Activated CD8-positive, alpha-beta T cell treated with anti-CD3 and anti-CD28 coated beads, Interleukin-2, amount 10 ng/mL, durations not matched to agents 7 days and 5 days (primary cell): ENCODE measurements at regions of chr16 and their contacts with region 1.

Region 1: DNA sequence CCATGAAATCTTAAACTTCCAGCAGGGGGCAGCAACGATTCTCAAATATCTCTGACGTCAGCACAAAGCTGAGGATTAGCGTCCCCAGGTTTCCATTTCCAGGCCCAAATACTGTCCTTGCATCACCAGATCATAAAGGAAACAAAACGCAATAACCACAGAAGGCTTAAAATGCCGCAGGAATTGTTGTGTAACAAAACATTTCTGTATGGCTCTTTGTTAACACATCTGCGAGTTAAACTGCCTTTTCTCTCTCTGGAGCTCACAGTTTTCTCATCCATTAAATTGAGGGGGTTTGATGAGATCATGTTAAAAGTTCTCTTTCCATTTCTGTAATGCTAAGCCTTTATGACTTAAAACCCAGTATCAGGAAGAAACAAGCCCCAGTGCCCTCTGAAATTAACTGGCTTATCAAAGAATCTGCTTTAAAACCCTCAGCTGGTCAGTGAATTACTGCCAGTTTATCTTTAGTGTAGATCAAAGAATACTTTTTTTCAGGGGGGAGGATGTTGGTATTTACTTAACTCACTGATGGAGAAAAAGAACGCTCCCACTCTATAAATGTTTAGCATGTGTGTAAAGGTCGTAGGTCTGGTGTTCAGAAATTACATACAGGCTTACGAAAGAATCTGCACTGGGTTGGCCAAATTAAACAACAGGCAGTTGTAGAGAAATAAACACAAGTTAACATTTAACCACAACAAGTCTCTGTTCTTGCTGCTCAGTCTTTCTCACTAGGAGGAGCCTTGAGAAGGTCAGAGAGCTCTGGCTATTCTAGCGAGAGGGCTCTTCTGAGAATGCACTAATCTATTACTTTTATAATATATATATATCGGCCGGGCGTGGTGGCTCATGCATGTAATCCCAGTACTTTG is 10.6 kb upstream of the TERF2 start:
- DNase-seq: peak; percentile 84
- ATAC-seq: peak; percentile 73
- H3K4me3 Mint-ChIP-seq: no peak overlapping the region
- H3K27ac Mint-ChIP-seq: peak overlapping the region; percentile 47
- H3K4me1 Mint-ChIP-seq: peaks cover 18% of the 10 kb centered on the region
- H3K27me3 Mint-ChIP-seq: no peaks in the 10 kb centered on the region

Region 2: GRCh38 chr16:69410285-69410990 is 14.0 kb after region 1 on chr16:
- CTCF ChIA-PET with region 1: interaction called, 39 read pairs
- POLR2A ChIA-PET with region 1: interaction called, 3 read pairs
- DNase-seq: no peak
- ATAC-seq: no peak
- H3K4me3 Mint-ChIP-seq: no peak overlapping the region
- H3K27ac Mint-ChIP-seq: peak overlapping the region; percentile 86
- H3K4me1 Mint-ChIP-seq: peaks cover 27% of the 10 kb centered on the region
- H3K27me3 Mint-ChIP-seq: no peaks in the 10 kb centered on the region

Region 3: GRCh38 chr16:69424053-69424934 is 27.9 kb after region 1 on chr16 and contains the start of gene CYB5B:
- CTCF ChIA-PET with region 1: interaction called, 20 read pairs
- POLR2A ChIA-PET with region 1: interaction called, 5 read pairs
- DNase-seq: peak; percentile 98
- ATAC-seq: peak; percentile 98
- H3K4me3 Mint-ChIP-seq: peak within 1 kb of the TSS; percentile 93
- H3K27ac Mint-ChIP-seq: peak within 1 kb of the TSS; percentile 91
- H3K4me1 Mint-ChIP-seq: peaks cover 33% of the 10 kb centered on the region
- H3K27me3 Mint-ChIP-seq: no peaks in the 10 kb centered on the region
- total RNA-seq, gene CYB5B: 179 to 183 TPM

Region 4: GRCh38 chr16:69465083-69465721 is 68.8 kb after region 1 on chr16:
- CTCF ChIA-PET with region 1: interaction called, 26 read pairs
- POLR2A ChIA-PET with region 1: no interaction called
- DNase-seq: no peak
- ATAC-seq: peak; percentile 50
- H3K4me3 Mint-ChIP-seq: no peak overlapping the region
- H3K27ac Mint-ChIP-seq: peak overlapping the region; percentile 70
- H3K4me1 Mint-ChIP-seq: peaks cover 44% of the 10 kb centered on the region
- H3K27me3 Mint-ChIP-seq: no peaks in the 10 kb centered on the region

Region 5: DNA sequence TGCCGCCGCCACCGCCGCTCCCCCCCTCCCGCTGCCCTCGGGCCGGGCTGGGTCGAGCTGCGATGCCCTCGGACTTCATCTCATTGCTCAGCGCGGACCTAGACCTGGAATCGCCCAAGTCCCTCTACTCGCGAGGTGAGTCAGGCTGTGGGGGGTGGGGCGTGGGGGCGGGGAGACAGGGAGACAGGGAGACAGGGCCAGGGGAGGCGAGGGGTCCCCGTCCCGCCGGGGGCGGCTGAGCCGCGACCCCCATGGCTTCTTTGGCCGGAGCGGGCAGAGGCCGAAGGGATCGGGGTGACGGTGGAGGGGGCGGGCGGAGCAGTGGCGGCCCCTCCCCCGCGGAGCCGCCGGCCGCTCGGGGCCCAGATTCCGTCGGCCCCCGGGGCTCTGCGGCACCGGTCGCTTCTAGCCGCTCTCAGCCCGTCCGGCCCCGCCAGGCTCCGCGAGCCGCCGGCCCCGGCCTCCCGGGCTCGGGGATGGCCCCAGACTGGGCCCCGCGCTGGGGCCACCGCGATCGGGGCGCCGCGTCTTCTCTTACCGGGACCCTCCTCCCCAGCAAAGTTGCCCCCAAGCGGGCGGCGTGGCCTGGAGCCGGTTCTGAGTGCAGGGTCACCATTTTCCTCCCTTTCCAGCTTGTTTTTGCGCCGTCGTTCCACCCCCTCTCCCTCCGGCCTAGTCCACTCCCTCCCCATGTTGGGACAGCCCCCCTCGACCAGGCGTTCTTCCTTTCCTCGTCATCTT is 170.0 kb after region 1 on chr16:
- CTCF ChIA-PET with region 1: interaction called, 23 read pairs
- POLR2A ChIA-PET with region 1: interaction called, 3 read pairs
- DNase-seq: peak; percentile 43
- ATAC-seq: peak; percentile 56
- H3K4me3 Mint-ChIP-seq: peak overlapping the region; percentile 96
- H3K27ac Mint-ChIP-seq: peak overlapping the region; percentile 95
- H3K4me1 Mint-ChIP-seq: peaks cover 47% of the 10 kb centered on the region
- H3K27me3 Mint-ChIP-seq: no peaks in the 10 kb centered on the region

Region 6: DNA sequence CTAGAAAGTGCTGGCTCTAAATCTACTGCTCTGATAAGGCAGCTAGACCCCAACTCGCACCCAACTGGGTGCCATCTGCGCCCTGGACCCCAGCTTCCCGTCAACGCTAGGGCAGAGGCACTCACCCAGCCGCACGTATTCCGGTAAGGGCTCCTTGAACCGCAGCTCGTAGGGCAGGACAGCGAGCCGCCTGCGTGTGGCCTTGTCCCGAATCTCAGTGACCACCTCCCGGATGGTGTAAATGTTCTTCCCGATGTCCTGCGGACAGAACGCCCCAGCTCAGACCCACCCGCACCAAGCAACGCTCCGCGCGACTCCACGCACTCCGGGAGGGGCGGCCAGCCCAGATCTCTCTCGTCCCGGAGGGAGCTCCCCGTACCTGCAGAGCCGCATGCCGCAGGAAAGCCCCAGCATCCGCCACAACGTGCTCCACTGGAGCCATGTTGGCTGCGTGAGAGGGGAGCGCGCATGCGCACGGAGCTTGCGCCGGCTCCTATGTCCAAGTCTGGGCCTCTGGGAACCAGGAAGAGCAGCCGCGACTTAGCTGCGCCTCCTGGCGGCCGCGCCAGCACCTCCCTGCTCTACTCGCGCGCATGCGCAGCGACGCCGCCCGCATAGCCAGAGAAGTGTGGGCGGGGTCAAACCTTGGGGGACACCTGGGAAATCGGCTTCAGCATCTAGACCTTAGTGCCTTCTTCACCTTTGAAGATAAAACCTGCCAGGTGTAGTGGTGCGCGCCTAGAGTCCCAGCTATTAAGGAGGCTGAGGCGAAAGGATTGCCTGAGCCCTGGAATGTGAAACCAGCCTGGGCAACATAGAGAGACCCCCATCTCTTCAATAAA is 358.3 kb after region 1 on chr16 and contains the start of gene NOB1:
- CTCF ChIA-PET with region 1: interaction called, 38 read pairs
- POLR2A ChIA-PET with region 1: interaction called, 7 read pairs
- DNase-seq: peak; percentile 97
- ATAC-seq: peak; percentile 99
- H3K4me3 Mint-ChIP-seq: peak within 1 kb of the TSS; percentile 100
- H3K27ac Mint-ChIP-seq: peak within 1 kb of the TSS; percentile 98
- H3K4me1 Mint-ChIP-seq: peaks cover 30% of the 10 kb centered on the region
- H3K27me3 Mint-ChIP-seq: no peaks in the 10 kb centered on the region
- total RNA-seq, gene NOB1: 53.3 to 58.8 TPM